Common myeloid progenitor, CD34-positive (primary cell): ENCODE measurements at regions of chr3 and their contacts with region 1.

Region 1: GRCh38 chr3:36904641-36905040 is 40.2 kb downstream of the TRANK1 start:
- DNase-seq: peak in 2 of 3 donors; percentile 36 to 42
- H3K4me3 ChIP-seq: no peak overlapping the region
- H3K27ac ChIP-seq: no peak overlapping the region
- H3K4me1 ChIP-seq: peaks cover 23 to 56% (median 49%) of the 10 kb centered on the region in 4 experiments
- H3K27me3 ChIP-seq: no peaks in the 10 kb centered on the region

Region 2: DNA sequence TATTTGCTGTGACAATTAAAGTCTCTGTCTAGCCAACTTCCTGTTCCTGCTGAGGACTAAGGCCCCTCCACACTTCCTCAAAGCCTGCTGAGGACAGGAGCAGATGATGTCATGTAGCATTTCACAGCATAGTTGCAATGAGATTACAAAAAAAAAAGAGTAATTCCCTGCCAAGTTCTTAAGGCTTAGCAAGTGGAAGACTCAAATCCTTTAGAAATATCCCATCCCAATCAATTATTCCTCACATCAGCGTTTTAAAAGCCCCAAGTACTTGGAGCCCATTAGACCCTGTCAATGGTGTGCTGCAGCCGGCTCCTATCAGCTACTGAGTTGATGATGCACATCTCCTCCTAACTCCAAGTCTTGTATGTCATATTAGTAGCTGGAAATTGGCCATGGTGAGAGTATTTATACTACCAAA is 11.5 kb before region 1 on chr3:
- CTCF ChIA-PET with region 1: interaction called, 18 read pairs
- POLR2A ChIA-PET with region 1: no interaction called
- DNase-seq: peak; percentile 47 to 84 (median 73)
- H3K4me3 ChIP-seq: no peak overlapping the region
- H3K27ac ChIP-seq: peak overlapping the region in 1 of 2 experiments; percentile 45
- H3K4me1 ChIP-seq: peaks cover 8 to 28% (median 17%) of the 10 kb centered on the region in 4 experiments
- H3K27me3 ChIP-seq: no peaks in the 10 kb centered on the region

Region 3: GRCh38 chr3:36944012-36944640 is 39.5 kb after region 1 on chr3:
- CTCF ChIA-PET with region 1: interaction called, 18 read pairs
- POLR2A ChIA-PET with region 1: interaction called, 4 read pairs
- DNase-seq: peak in 2 of 3 donors; percentile 60 to 72
- H3K4me3 ChIP-seq: peak overlapping the region; percentile 70 to 92 (median 84)
- H3K27ac ChIP-seq: peak overlapping the region; percentile 40 to 72
- H3K4me1 ChIP-seq: peaks cover 0 to 18% (median 16%) of the 10 kb centered on the region in 4 experiments
- H3K27me3 ChIP-seq: no peaks in the 10 kb centered on the region

Region 4: DNA sequence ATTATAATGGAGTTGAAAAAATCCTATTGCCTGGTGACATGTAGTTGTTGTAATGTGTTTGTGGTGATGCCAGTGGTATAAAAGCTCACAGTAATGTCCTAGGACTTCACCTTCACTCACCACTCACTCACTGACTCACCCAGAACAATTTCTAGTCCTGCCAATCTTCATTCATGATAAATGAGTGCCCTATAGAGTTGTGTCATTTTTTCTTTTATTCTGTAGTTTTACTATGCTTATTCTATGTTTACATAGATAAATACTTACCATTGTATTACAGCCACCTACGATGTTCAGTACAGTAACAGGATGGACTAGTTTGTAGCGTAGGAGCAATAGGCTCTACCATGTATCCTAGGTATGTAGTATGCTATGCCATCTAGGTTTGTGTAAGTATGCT is 358.2 kb after region 1 on chr3:
- CTCF ChIA-PET with region 1: no interaction called
- POLR2A ChIA-PET with region 1: no interaction called
- DNase-seq: no peak
- H3K4me3 ChIP-seq: no peak overlapping the region
- H3K27ac ChIP-seq: no peak overlapping the region
- H3K4me1 ChIP-seq: no peaks in the 10 kb centered on the region
- H3K27me3 ChIP-seq: no peaks in the 10 kb centered on the region